Panc1 (cell line): ENCODE measurements at regions of chr2 and their contacts with region 1.

Region 1: GRCh38 chr2:201795607-201796477 is 10.5 kb upstream of the CDK15 start:
- DNase-seq: peak; percentile 33
- ATAC-seq: peak; percentile 54
- H3K4me3 ChIP-seq: no peak overlapping the region
- H3K27ac ChIP-seq: peak overlapping the region; percentile 93
- H3K4me1 ChIP-seq: peaks cover 29% of the 10 kb centered on the region
- H3K27me3 ChIP-seq: no peaks in the 10 kb centered on the region
- CTCF ChIP-seq: peak; percentile 90

Region 2: DNA sequence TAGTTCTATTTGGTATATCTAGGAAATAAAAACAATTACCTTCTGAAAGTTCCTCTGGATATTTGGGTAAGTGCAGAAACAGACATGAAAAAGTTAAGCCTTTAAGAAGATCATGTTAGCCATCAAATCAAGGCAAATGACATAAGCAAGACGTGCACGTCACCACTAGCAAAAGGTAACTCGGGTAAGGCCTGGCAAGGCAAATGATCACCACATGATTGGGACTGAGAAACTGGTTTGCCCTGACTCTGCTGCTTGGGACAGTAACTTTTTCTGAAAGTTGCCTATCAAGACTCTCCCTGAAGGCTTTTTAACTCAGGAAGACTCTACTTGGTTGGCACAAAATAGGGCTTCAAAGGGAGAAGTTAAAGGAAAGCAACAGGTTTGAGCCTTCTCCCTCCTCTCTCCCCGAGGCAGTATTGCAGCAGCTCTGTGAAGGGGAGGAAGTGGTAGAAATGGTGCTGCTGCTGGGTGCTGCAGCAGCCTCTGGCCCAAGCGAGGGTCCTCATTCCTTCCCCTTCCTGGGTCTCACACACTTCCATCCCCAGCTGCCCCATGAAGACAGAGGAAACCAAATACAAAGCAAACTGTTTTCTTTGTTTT is 135.4 kb before region 1 on chr2:
- CTCF ChIA-PET with region 1: no interaction called
- POLR2A ChIA-PET with region 1: no interaction called
- in situ Hi-C with region 1: no loop called
- intact Hi-C with region 1: no loop called
- DNase-seq: no peak
- ATAC-seq: no peak
- H3K4me3 ChIP-seq: no peak overlapping the region
- H3K27ac ChIP-seq: no peak overlapping the region
- H3K4me1 ChIP-seq: no peaks in the 10 kb centered on the region
- H3K27me3 ChIP-seq: no peaks in the 10 kb centered on the region
- CTCF ChIP-seq: no peak

Region 3: DNA sequence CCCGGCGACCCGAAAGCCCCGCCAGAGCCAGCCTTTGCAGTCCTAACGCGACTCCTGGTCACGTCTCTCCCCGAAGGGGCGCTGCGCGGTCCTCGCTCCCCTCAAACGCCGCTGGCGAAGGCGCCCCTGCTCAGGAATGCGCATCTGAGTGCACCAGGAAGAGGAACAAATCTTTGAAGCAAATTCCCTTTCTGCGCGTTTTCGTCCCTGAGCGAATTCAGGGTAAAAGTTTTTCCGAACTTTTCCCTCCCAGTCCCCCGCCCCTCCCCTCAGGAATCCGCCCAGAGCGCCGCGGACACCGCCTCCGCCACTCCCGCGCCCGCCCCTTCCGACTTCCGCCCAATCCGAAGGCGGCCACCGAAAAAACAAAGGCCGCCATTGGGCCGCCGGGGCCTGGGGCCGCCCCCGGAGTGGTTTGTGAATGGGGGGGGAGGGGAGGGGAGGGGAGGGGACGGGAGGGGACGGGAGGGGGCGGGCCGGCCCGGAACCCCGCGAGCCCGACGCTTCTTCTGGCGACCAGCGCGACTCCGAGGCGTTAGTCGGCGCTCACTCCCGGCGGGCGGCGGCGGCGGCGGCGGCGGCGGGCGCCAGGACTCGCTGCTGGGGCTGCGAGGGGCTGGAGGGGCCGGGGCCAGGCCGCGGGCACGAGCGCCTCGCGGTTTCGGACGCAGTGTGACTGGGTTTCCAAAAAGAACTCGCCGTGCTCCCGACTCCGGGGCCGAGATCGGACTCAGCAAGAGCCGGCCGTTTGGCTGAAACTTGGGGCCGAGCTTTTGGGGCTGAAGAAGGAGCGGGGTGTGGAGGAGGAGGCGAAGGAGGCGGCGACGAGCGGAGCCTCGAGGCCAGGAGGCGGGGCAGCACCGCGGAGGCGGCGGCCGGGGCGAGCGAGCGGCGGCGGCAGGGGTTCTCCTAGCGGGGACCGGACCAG is 237.7 kb after region 1 on chr2 and contains the start of gene FZD7:
- CTCF ChIA-PET with region 1: no interaction called
- POLR2A ChIA-PET with region 1: no interaction called
- in situ Hi-C with region 1: no loop called
- intact Hi-C with region 1: loop called (anchors 10 kb)
- DNase-seq: peak; percentile 45
- ATAC-seq: peak; percentile 89
- H3K4me3 ChIP-seq: peak within 1 kb of the TSS; percentile 67 to 92
- H3K27ac ChIP-seq: peak within 1 kb of the TSS; percentile 87
- H3K4me1 ChIP-seq: peaks cover 19% of the 10 kb centered on the region
- H3K27me3 ChIP-seq: no peaks in the 10 kb centered on the region
- CTCF ChIP-seq: peak; percentile 37
- total RNA-seq, gene FZD7: 38.1 TPM